ENCODE measurements at regions of chr16 and their contacts with region 1.

Region 1: DNA sequence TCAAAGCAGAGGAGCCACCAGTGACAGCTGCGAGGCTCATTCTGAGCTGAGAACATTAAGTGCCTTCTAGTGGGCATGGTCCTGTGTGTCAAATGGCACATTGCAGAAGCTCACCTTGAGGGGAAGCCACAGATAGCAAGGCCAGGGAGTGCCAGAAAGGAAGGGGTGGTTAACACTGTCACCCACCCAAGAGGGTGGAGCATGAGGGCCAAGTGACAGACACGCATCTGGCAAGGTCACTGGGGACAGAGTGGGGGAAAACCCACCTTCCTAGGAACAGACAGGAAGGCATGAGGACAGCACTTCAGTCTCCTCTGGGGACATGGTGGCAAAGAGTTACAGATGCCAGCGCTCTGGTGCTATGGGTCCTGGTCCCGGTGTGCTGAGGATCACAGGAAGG is 22.1 kb downstream of the NUBP1 start:
- H3K4me3 Mint-ChIP-seq: no peak overlapping the region
- H3K27ac Mint-ChIP-seq: peak overlapping the region; percentile 81
- H3K4me1 Mint-ChIP-seq: peaks cover 89% of the 10 kb centered on the region
- H3K27me3 Mint-ChIP-seq: no peaks in the 10 kb centered on the region

Region 2: GRCh38 chr16:10752843-10753523 is 12.8 kb before region 1 on chr16:
- intact Hi-C with region 1: loop called (anchors 1 kb)
- H3K4me3 Mint-ChIP-seq: peak overlapping the region; percentile 58
- H3K27ac Mint-ChIP-seq: peak overlapping the region; percentile 96
- H3K4me1 Mint-ChIP-seq: peaks cover 96% of the 10 kb centered on the region
- H3K27me3 Mint-ChIP-seq: no peaks in the 10 kb centered on the region

Region 3: DNA sequence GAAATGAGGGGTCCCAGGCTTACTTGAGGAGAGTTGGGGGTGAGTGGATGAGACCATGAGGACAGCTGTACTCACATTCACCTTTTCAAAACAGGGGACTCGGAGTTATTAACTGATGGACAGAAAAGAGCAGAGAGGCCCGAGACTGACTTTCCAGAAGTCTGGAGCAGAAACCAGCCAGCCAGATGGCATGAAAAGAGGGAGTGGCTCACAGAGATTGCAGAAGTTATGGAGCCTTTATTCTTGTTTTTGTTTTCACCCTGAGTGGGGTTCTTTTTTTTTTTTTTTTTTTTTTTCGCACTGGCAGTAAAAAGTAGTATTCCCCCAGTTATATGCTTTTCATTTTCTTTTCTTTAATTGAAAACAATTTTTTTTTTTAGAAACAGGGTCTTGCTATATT is 34.0 kb after region 1 on chr16:
- intact Hi-C with region 1: loop called (anchors 5 kb)
- H3K4me3 Mint-ChIP-seq: no peak overlapping the region
- H3K27ac Mint-ChIP-seq: peak overlapping the region; percentile 88
- H3K4me1 Mint-ChIP-seq: peaks cover 59% of the 10 kb centered on the region
- H3K27me3 Mint-ChIP-seq: no peaks in the 10 kb centered on the region

Measured in dendritic cell treated with granulocyte-macrophage colony-stimulating factor and Interleukin-4, amounts not matched to agents 40 ng/mL and 50 ng/mL, for 4 days (primary cell).